Activated CD4-positive, alpha-beta memory T cell treated with anti-CD3 and anti-CD28 coated beads for 36 hours (primary cell): ENCODE measurements at regions of chr6 and their contacts with region 1.

Region 1: DNA sequence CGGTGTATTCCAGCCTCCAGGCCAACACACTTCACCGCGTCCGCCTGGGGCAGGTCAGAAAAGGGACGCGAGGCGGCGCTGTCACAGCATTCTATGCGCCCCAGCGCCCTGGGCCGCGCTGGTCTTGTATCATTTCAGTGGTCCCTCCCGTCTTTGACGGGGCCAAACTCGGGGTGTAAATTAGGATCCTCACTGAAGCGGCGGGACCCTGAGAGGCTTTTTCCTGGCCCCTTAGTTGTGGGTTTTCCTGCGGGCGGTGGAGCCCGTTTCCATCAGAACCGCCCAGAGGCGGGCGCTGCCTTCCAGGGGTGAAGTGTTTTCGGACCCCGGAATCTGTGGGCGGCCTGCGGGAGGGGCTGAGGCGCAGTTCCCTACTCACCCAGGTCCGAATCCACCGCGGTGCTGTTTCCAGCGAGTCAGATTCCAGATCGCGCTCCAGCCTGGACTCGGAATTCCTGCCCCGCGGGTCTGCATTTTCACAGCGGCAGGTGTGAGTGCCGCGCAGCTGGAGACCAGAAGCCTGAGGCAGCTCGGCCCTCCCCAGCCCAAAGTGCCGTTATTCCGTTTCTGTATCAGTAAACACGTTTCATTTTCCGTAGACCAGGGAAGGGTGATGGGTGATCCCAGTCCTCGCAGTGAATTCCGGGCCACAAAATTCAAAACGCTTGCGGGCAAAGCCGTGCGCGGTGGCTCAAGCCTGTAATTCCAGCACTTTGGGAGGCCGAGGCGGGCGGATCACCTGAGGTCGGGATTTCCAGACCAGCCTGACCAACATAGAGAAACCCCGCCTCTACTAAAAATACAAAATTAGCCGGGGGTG is 3.9 kb upstream of the MICB start:
- DNase-seq: peak; percentile 89
- H3K4me3 Mint-ChIP-seq: peak overlapping the region; percentile 90
- H3K27ac Mint-ChIP-seq: peak overlapping the region; percentile 94
- H3K4me1 Mint-ChIP-seq: peaks cover 42% of the 10 kb centered on the region
- H3K27me3 Mint-ChIP-seq: no peaks in the 10 kb centered on the region

Region 2: DNA sequence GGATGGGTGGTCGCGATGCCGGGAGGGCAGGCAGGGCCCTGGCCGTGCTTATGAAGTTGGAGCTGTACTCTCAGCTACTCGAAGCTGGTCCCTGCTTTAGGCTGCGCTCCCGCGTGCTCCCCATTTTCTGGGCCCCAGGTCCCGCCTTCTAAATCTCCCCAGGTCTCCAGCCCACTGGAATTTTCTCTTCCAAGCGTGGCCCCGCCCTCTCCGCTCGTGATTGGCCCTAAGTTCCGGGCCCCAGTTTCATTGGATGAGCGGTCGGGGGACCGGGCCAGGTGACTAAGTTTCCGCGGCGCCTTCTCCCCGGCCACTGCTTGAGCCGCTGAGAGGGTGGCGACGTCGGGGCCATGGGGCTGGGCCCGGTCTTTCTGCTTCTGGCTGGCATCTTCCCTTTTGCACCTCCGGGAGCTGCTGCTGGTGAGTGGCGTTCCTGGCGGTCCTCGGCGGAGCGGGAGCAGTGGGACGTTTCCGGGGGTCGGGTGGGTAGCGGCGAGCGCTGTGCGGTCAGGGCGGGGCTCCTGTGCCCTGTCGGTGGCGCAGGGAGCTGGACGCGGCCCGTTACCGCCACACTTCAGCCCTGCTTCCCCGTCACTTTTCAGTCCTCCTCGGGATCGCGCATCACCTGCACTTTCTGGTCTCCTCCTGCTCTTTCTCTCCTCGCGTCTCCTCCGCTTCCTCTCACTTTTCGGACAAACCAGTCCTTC is 90.6 kb before region 1 on chr6 and contains the start of gene MICA:
- CTCF ChIA-PET with region 1: interaction called, 16 read pairs
- POLR2A ChIA-PET with region 1: interaction called, 3 read pairs
- intact Hi-C with region 1: loop called (anchors 2 kb)
- DNase-seq: peak; percentile 84
- H3K4me3 Mint-ChIP-seq: peak within 1 kb of the TSS; percentile 79
- H3K27ac Mint-ChIP-seq: peak within 1 kb of the TSS; percentile 47
- H3K4me1 Mint-ChIP-seq: peaks cover 57% of the 10 kb centered on the region
- H3K27me3 Mint-ChIP-seq: no peaks in the 10 kb centered on the region
- total RNA-seq, gene MICA: 7.1 to 8.6 TPM

Region 3: GRCh38 chr6:31652925-31653718 is 159.0 kb after region 1 on chr6:
- CTCF ChIA-PET with region 1: no interaction called
- POLR2A ChIA-PET with region 1: interaction called, 3 read pairs
- intact Hi-C with region 1: loop called (anchors 5 kb)
- DNase-seq: peak; percentile 92
- H3K4me3 Mint-ChIP-seq: peak overlapping the region; percentile 94
- H3K27ac Mint-ChIP-seq: peak overlapping the region; percentile 99
- H3K4me1 Mint-ChIP-seq: peaks cover 54% of the 10 kb centered on the region
- H3K27me3 Mint-ChIP-seq: no peaks in the 10 kb centered on the region

Region 4: DNA sequence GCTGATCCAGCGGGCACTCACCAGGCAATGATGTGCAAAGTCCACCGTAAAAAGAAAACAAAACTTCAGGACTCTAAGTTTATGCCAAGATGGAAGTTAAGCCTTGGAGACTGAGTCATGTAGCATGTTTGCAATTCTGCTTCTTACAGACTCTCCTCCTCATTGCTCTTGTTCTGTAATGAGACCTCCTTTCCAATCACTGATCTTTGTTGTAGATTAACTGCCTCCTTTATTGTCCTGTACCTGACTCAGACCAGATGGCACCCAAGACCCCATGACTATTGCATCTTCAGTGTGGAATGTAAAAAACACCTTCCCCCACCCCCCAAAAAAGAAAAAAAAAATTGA is 357.4 kb after region 1 on chr6:
- CTCF ChIA-PET with region 1: no interaction called
- POLR2A ChIA-PET with region 1: no interaction called
- intact Hi-C with region 1: no loop called
- DNase-seq: no peak
- H3K4me3 Mint-ChIP-seq: no peak overlapping the region
- H3K27ac Mint-ChIP-seq: no peak overlapping the region
- H3K4me1 Mint-ChIP-seq: no peaks in the 10 kb centered on the region
- H3K27me3 Mint-ChIP-seq: no peaks in the 10 kb centered on the region